Activated CD4-positive, alpha-beta T cell treated with anti-CD3 and anti-CD28 coated beads, Interleukin-2, amount 10 ng/mL, durations not matched to agents 24 days and 14 days (primary cell): ENCODE measurements at regions of chr10 and their contacts with region 1.

Region 1: DNA sequence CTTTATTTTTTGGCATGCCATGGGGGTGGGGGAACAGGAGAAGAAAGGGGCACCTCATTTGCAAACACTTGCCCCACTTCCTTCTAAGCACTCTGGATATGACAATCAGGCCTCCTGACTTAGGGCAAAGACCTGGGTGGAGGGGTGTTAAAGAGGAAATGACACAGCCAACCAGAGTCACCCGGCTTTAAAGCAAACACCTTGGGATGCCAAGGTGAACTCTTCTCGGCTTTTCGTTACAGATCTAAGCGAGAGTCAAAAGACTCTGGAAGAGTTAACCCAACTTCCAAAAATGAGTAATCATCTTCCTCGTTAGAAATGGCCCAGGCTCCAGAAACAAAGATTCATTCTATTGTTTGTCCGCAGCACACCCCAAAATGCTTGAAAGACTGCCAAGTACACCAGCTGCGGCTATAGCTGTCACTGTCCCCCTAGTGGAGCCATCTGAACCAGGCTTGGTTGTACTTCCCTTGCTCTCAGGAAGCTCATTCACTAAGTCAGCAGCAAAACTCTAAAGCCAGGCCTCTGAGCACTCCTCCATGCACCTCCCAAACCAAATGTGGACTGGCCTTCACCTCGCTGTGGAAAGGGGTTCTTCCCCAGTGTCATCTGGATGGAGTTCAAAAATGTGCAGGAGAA is 24.8 kb downstream of the FAM53B start:
- DNase-seq: peak; percentile 88
- H3K4me3 Mint-ChIP-seq: peak overlapping the region; percentile 43
- H3K27ac Mint-ChIP-seq: peak overlapping the region; percentile 78
- H3K4me1 Mint-ChIP-seq: peaks cover 78% of the 10 kb centered on the region
- H3K27me3 Mint-ChIP-seq: no peaks in the 10 kb centered on the region

Region 2: DNA sequence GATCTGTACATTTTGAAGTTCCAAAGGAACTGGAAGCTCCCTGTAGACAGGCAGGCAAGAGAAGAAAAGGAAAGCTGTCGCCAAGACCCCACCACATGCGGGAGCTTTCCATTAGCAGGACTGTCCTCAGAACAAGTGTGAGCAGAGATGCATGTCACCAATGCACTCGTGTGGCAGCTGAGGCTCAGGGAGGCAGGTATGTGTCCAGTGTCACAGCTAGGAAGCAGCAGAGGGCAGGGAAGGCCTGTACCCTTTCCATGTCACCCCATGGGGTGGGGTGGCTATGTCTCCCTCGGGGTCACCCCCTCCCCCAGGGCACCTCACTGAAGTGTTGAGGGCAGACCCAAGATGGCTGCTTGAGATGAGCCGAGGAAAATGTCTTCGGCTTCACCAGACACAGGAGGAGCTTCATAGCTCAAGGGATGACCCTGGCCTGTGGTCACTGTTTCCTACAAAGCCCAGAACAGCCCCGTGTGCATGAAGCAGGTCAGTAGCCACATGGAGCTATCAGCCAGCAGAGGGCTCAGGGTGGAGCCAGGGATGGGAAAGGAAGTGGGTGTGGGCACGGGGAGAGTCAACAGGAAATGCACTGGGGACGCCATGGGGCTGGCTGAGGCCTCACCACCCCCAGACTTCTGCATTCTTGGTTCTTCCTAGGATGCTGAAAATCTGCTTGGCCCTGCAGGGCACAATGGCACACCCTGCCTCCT is 71.8 kb before region 1 on chr10:
- intact Hi-C with region 1: loop called (anchors 1 kb)
- DNase-seq: peak; percentile 92
- H3K4me3 Mint-ChIP-seq: peak overlapping the region; percentile 81
- H3K27ac Mint-ChIP-seq: peak overlapping the region; percentile 94
- H3K4me1 Mint-ChIP-seq: peaks cover 64% of the 10 kb centered on the region
- H3K27me3 Mint-ChIP-seq: no peaks in the 10 kb centered on the region

Region 3: DNA sequence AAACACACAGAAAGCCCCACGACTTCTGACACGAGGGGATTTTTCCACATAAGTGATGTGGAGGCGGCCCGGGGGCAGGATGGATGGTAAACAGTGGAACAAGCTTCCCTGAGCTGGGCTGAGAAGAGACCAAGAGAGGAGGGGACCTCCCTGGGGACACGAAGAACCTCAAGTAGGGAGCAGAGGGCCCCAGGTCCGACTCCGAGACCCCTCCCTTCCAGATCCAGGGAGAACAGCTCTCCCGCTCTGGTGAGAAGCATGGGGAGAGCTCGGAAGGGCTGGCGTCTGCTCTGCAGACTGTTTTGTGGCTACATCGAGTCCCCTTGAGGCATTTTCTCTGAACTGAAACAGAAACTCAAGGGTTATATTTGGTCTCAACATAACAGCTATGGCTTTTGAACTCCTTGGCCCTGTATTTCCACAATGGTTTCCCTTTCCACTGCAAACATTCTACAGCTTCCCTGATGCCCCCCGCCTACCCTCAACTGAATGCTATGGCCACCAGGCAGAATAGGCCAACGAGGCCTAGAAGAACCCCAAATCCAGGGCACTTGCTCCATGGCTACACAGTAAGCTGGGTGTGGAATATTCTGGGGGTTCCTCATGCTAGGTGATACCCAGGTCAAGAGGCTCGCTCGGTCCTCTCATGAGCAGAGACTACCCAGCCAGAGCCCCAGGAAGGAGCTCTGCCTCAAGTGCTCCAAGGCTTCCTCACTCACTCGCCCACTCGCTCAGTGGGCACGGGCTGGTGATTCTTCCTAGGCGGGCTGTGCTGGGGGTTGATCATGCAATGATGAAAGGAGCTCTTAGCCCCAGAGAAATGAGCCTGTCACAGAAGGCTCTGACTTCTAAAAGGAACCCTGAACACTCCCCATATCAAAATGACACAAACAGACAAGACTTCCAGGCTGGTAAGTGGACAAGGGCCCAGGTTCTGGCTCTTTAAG is 22.6 kb before region 1 on chr10:
- intact Hi-C with region 1: loop called (anchors 1 kb)
- DNase-seq: peak; percentile 83
- H3K4me3 Mint-ChIP-seq: peak overlapping the region; percentile 60
- H3K27ac Mint-ChIP-seq: peak overlapping the region; percentile 94
- H3K4me1 Mint-ChIP-seq: peaks cover 77% of the 10 kb centered on the region
- H3K27me3 Mint-ChIP-seq: no peaks in the 10 kb centered on the region

Region 4: DNA sequence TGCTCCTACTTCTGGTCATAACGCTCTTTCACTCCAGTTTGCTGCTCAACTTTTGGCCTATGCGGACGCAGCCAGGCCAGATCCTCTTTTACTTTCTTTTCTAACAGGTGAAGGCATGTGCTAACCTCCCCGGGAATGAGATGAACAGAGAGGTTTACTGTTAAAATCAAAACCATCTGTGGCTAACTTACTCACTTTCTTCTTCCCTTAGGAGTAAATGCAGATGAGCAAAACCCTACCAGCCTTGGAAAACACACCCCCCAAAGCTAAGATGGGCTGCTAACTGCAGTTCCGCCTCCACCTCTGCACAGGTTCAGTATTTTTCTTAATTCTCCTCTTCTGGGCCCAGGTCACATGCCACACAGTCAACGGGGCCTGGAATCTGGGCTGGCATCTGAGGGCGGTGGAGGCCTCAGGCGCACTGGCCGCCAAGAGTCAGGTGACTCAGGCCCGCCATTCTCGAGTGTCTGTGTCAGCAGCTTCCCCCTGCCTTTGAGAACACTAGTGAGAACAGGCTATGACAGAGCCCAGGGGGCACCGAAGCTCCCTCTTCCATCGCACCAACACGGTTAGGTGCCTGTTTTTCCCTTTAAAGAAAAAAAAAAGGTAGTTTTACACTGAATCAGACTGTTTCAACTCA is 13.7 kb after region 1 on chr10:
- intact Hi-C with region 1: loop called (anchors 1 kb)
- DNase-seq: peak; percentile 80
- H3K4me3 Mint-ChIP-seq: peak overlapping the region; percentile 51
- H3K27ac Mint-ChIP-seq: peak overlapping the region; percentile 63
- H3K4me1 Mint-ChIP-seq: peaks cover 67% of the 10 kb centered on the region
- H3K27me3 Mint-ChIP-seq: no peaks in the 10 kb centered on the region